Right ventricle myocardium inferior (tissue), 1 donor: ENCODE measurements at regions of chr11 and their contacts with region 1.

Region 1: DNA sequence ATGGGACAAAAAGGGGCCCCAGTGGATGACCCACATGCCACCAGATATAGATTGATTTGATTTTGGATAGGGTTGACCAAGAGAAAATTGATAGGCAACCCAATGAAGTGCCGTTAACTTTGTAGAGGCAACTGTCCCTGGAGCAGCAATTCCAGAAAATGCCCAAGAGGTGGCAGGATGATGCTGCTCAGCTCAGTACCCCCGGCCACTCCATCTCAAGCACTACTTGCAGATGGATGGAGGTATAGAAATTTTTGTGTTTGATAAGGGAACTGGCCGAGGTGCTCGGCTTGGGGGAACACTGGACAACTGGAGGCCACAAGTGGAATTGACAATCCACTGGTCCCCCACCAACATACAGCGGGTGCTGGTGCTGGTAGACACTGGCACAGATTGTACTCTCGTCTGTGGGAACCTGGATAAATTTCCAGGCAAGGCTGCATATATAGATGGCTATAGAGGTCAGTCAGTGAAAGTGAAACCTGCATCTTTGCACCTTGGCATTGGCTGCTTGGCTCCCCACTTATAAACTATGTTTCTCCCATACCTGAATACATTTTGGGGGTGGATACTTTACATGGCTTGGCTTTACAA is 86.3 kb downstream of the CCDC83 start:
- DNase-seq: no peak
- ATAC-seq: peak; percentile 67

Region 2: DNA sequence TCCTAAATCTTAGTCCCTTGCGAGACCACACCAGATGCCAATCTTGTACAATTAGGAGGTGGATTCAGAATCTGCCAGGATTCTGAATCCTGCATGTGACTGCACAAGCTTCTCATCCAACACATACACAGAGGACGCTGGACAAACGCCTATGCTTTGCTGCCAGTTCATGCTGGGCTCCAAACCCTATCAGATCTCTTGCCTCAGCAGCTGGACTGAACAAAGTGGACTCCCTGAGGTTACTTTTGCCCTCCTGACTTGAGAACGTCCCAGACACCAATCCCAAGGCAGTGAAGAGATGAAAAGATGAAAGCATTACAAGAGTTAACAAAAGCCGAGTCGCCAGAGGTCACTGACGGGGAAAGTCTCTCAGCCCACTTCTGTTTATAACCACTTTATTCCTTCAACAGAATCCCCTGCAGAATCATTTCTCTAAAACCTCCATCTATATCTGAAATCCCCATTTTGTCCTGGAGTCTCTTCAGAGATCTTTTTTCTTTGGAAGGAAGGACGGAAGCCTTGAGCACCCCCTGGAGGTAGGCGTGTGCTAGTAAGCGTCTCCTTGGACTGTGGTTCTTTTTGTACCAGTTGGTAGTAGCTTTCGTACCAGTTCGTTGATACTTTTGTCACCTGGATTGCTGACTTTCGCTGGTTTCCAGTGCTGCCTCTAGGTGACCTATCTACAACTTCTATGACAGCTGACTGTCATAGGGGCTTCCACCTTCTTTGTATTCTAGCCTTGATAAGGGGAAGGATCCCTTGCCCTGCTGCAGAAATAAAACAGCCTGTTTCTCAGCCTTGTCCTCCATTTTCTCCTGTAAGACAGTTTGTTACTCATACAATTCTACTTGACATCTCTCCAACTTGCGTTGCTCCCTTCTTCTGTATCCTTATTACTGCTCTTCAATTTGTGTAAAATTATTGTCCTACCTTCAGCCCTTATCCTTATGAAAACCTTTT is 276.9 kb after region 1 on chr11:
- intact Hi-C with region 1: loop called (anchors 1 kb)
- DNase-seq: no peak
- ATAC-seq: peak; percentile 91

Region 3: DNA sequence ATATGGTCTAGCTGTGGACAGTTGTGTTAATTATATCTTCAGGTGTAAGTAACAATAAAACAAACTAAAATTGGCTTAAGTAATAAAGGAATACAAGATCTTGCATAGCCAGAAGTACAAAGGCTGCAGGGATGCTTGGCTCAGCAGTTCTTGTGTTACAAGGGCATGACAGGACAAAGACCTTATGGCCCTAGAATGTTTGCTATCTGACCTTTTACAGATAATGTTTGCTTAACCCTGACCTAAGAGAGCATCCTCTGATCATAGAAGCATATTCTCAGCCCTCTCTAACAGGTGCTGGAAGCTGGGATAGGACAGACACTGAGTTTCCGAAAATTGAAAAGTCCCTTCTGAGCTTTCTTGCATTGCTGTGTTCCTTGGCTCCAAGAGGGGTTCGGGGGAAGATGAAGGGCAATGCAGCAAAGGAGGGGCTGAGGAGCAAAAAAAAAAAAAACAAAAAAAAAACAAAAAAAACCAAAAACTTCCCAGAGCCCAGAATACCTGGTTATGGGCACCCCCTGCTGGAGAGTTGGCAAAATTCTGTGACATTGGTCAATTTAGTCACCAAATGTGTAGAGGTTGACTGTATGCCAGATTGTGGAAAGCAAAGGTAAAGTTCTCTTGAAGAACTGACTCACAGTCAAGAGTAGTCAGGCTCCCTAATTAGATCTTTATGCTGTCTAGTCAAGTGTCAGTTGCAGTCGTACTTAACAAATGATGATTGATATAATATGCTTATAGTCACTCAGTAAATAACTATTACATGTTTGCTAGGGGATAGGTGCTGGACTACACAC is 350.2 kb after region 1 on chr11:
- intact Hi-C with region 1: loop called (anchors 1 kb)
- DNase-seq: no peak
- ATAC-seq: no peak